Activated CD4-positive, alpha-beta memory T cell treated with anti-CD3 and anti-CD28 coated beads for 36 hours (primary cell): ENCODE measurements at regions of chr17 and their contacts with region 1.

Region 1: DNA sequence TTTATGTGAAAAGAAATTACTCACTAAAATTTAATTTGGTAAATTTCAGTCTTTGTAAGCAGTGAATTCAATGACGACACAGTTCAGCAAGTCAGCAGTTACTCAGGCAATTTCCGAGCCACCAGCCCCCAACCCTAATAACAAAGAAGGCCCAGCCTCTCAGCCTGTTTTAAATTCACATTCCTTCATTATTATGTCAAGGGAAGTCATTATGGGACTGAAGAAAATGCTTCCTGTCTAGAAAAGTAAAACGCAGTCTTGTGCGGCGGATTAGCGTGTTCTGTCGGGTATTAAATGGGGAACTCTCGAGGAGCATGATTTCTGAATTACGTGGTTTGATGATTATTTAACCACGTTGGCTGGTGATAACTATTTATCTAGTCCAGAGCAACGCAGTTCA is 177.6 kb downstream of the AIPL1 start:
- DNase-seq: no peak
- H3K4me3 Mint-ChIP-seq: no peak overlapping the region
- H3K27ac Mint-ChIP-seq: no peak overlapping the region
- H3K4me1 Mint-ChIP-seq: no peaks in the 10 kb centered on the region
- H3K27me3 Mint-ChIP-seq: peaks cover 48% of the 10 kb centered on the region

Region 2: GRCh38 chr17:6187836-6188235 is 69.5 kb before region 1 on chr17:
- CTCF ChIA-PET with region 1: no interaction called
- POLR2A ChIA-PET with region 1: interaction called, 10 read pairs
- intact Hi-C with region 1: no loop called
- DNase-seq: no peak
- H3K4me3 Mint-ChIP-seq: no peak overlapping the region
- H3K27ac Mint-ChIP-seq: no peak overlapping the region
- H3K4me1 Mint-ChIP-seq: no peaks in the 10 kb centered on the region
- H3K27me3 Mint-ChIP-seq: peaks cover 10% of the 10 kb centered on the region

Region 3: DNA sequence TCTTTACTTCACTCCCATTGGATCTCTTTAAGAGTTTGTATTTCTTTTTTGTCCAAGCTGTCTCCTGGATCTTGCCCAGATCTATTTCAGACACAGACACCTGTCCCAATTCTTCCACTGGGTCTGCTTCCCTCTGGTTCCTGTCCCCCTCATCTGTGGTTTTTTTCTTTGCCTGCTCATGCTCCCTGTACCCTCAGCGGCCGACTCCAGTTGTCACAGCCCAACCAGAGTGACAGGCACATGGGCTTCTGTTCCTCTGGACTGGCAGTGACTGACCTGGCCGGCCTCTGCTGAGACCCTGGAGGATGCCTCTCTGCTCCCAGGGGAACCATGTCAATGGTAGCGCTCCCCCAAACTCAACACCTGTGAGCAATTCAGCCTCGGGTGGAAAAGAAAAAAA is 44.6 kb before region 1 on chr17:
- CTCF ChIA-PET with region 1: no interaction called
- POLR2A ChIA-PET with region 1: no interaction called
- intact Hi-C with region 1: no loop called
- DNase-seq: no peak
- H3K4me3 Mint-ChIP-seq: no peak overlapping the region
- H3K27ac Mint-ChIP-seq: no peak overlapping the region
- H3K4me1 Mint-ChIP-seq: no peaks in the 10 kb centered on the region
- H3K27me3 Mint-ChIP-seq: peaks cover 28% of the 10 kb centered on the region

Region 4: DNA sequence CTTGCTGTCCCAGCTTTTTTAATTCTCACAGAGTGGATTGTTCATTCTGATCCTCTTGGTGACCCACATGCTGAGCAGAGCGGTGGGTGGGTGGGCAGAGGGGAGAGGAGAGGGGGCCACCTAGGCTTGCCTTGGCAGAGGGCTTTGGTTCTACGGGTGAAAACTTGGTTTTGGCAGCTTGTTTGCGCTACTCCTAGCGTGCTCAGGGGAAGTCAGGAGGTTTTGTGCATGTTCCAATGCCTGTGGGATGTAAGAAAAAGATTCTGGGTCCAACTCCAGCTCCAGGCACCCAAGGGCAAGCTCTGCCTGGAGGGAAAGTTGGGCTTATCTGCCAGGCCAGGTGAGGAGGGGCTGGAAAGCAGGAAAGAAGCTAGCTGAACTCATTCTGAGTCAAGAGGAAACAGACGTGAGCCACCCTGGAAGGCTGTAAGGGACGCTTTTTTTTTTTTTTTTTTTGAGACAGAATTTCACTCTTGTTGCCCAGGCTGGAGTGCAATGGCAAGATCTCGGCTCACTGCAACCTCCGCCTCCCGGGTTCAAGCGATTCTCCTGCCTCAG is 18.0 kb before region 1 on chr17:
- CTCF ChIA-PET with region 1: no interaction called
- POLR2A ChIA-PET with region 1: no interaction called
- intact Hi-C with region 1: no loop called
- DNase-seq: no peak
- H3K4me3 Mint-ChIP-seq: no peak overlapping the region
- H3K27ac Mint-ChIP-seq: no peak overlapping the region
- H3K4me1 Mint-ChIP-seq: no peaks in the 10 kb centered on the region
- H3K27me3 Mint-ChIP-seq: peaks cover 35% of the 10 kb centered on the region

Region 5: GRCh38 chr17:7064261-7064660 is 806.9 kb after region 1 on chr17:
- CTCF ChIA-PET with region 1: no interaction called
- POLR2A ChIA-PET with region 1: no interaction called
- intact Hi-C with region 1: no loop called
- DNase-seq: no peak
- H3K4me3 Mint-ChIP-seq: no peak overlapping the region
- H3K27ac Mint-ChIP-seq: no peak overlapping the region
- H3K4me1 Mint-ChIP-seq: peaks cover 16% of the 10 kb centered on the region
- H3K27me3 Mint-ChIP-seq: peaks cover 17% of the 10 kb centered on the region